ENCODE measurements at regions of chr3 and their contacts with region 1.

Region 1: DNA sequence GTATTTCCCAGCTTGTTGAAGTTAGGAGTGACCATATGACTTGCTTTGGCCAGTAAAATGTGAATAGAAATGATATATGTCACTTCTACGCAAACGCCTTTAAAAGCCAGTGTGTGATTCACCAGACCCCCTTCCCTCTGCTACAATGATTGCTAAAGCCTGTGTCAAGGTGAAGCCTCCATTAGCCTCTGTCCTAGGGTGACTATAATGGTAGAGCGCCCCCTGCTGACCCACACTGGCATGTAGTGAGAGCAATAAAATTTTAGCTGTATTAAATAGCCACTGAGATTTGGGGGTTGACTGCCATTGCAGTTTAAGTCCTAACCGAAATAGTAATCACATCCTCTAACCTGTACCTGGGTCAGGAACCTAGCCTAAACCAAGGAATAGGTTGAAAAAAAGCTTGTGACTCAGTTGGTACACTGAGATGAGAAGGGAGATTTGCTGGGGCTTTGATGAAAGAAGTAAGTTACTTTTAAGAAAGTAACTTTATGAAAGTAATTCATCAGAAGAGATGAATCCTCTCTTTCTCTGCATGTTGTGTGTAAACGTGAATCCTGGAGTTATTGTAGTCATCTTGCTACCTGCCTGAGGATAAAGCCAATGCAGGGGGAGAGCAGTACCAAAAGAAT is 52.6 kb downstream of the GTF2E1 start:
- DNase-seq: peak; percentile 93
- H3K4me3 Mint-ChIP-seq: no peak overlapping the region
- H3K27ac Mint-ChIP-seq: no peak overlapping the region
- H3K4me1 Mint-ChIP-seq: peaks cover 11% of the 10 kb centered on the region
- H3K27me3 Mint-ChIP-seq: peaks cover 3% of the 10 kb centered on the region

Region 2: GRCh38 chr3:120245386-120245785 is 549.7 kb before region 1 on chr3:
- CTCF ChIA-PET with region 1: interaction called, 4 read pairs
- intact Hi-C with region 1: loop called (anchors 2 kb)
- DNase-seq: no peak
- H3K4me3 Mint-ChIP-seq: no peak overlapping the region
- H3K27ac Mint-ChIP-seq: no peak overlapping the region
- H3K4me1 Mint-ChIP-seq: no peaks in the 10 kb centered on the region
- H3K27me3 Mint-ChIP-seq: peaks cover 5% of the 10 kb centered on the region

Region 3: DNA sequence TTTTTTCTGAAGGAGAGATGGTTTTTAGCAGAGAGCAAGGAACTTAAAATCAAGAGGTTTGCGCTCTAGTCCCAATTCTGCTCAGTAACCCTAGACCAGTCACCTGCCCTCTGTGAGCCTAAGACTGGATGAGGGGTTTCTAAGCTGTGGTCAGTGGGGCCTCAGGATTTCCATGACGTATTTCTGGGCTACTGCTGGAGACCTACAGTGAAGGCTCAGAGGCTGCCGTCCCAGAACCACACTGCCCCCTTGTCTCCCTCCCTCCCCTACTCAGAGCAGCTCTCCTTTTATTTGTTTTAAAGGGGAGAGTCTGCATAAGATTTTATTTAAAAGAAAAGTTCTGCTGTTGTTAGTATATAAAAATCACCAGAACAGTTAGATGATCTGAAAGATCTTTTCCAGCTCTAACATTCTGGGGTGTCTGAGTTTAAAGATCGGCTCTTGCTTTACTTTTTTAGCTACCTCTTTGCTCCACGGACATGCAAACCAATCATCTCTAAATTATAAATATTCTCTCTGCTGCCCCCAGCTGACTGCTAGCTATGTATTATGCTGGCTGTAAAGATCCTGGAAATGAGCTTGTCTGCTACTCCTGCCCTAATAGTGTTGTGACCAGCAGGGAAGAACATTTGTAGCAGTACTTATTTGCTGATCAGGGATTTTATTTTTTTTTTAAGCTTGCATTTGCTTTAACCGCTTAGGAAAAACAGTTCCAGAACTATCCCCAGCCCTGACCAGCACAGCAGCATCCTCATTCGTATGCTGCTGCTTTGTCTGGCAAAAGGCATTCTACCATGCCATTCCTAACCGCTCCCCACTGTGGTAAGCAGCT is 227.5 kb before region 1 on chr3:
- CTCF ChIA-PET with region 1: interaction called, 22 read pairs
- intact Hi-C with region 1: no loop called
- DNase-seq: peak; percentile 10
- H3K4me3 Mint-ChIP-seq: peak overlapping the region; percentile 8
- H3K27ac Mint-ChIP-seq: no peak overlapping the region
- H3K4me1 Mint-ChIP-seq: peaks cover 3% of the 10 kb centered on the region
- H3K27me3 Mint-ChIP-seq: peaks cover 5% of the 10 kb centered on the region

Measured in activated naive CD4-positive, alpha-beta T cell treated with anti-CD3 and anti-CD28 coated beads for 36 hours (primary cell).